ENCODE measurements at regions of chr2 and their contacts with region 1.

Region 1: GRCh38 chr2:36413218-36413617 is 57.6 kb downstream of the CRIM1 start:
- DNase-seq: no peak
- ATAC-seq: peak in 3 of 4 donors; percentile 18 to 52 (median 51)
- H3K4me3 ChIP-seq: no peak overlapping the region
- H3K27ac ChIP-seq: peak overlapping the region; percentile 22 to 63 (median 48)
- H3K4me1 ChIP-seq: peaks cover 15 to 100% (median 83%) of the 10 kb centered on the region in 12 donors
- H3K27me3 ChIP-seq: no peaks in the 10 kb centered on the region
- CTCF ChIP-seq: no peak
- POLR2A ChIP-seq: no peak

Region 2: DNA sequence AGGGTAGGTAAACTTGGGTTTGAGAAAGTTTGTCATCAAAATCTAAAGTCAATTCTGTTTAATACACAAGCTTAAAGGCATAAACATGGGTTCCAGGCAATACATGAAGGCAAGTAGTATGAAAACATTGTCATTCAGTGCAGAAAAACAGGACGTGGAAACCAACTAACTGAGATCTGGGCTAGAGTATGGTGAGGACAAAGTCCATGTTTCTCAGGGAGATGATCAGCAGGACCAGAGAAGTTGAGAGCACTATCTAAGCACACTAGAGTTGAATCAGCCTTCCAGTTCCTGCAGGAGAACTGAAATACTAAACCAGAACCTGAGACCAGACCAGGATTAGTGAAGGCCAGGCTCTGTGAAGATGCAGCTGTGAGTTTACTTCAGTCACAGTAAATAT is 360.4 kb before region 1 on chr2:
- intact Hi-C with region 1: no loop called
- DNase-seq: no peak
- ATAC-seq: no peak
- H3K4me3 ChIP-seq: no peak overlapping the region
- H3K27ac ChIP-seq: no peak overlapping the region
- H3K4me1 ChIP-seq: no peaks in the 10 kb centered on the region
- H3K27me3 ChIP-seq: no peaks in the 10 kb centered on the region
- CTCF ChIP-seq: no peak
- POLR2A ChIP-seq: no peak

Region 3: DNA sequence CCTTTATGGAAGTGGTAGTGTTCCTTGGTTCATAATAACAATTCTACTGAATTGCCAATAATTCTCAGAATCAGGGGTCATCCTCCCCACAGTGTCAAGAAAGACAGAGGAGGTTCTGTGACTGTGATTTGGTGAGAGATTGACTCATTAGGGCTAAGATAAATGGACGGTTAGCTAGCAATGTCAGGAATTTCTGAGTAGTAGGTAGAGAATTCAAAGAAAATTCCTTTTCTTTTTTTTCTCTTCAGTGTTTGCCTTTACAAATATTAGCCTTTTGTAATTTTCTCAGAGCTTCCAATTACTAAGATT is 74.4 kb before region 1 on chr2:
- intact Hi-C with region 1: no loop called
- DNase-seq: no peak
- ATAC-seq: no peak
- H3K4me3 ChIP-seq: no peak overlapping the region
- H3K27ac ChIP-seq: no peak overlapping the region
- H3K4me1 ChIP-seq: no peaks in the 10 kb centered on the region
- H3K27me3 ChIP-seq: peaks cover 0 to 5% (median 0%) of the 10 kb centered on the region in 9 donors
- CTCF ChIP-seq: no peak
- POLR2A ChIP-seq: no peak

Region 4: GRCh38 chr2:36362291-36362690 is 50.9 kb before region 1 on chr2:
- intact Hi-C with region 1: loop called in 9 of 10 experiments (anchors 5 kb)
- DNase-seq: no peak
- ATAC-seq: no peak
- H3K4me3 ChIP-seq: no peak overlapping the region
- H3K27ac ChIP-seq: no peak overlapping the region
- H3K4me1 ChIP-seq: peaks cover 0 to 84% (median 63%) of the 10 kb centered on the region in 12 donors
- H3K27me3 ChIP-seq: peaks cover 0 to 5% (median 0%) of the 10 kb centered on the region in 9 donors
- CTCF ChIP-seq: no peak
- POLR2A ChIP-seq: no peak

Region 5: GRCh38 chr2:36450466-36451196 is 37.4 kb after region 1 on chr2:
- intact Hi-C with region 1: loop called in 3 of 10 experiments (anchors 5 kb)
- DNase-seq: no peak
- ATAC-seq: peak in 3 of 4 donors; percentile 50 to 77 (median 52)
- H3K4me3 ChIP-seq: no peak overlapping the region
- H3K27ac ChIP-seq: peak overlapping the region in 8 of 12 donors; percentile 9 to 76 (median 70)
- H3K4me1 ChIP-seq: peaks cover 12 to 86% (median 54%) of the 10 kb centered on the region in 12 donors
- H3K27me3 ChIP-seq: no peaks in the 10 kb centered on the region
- CTCF ChIP-seq: no peak
- POLR2A ChIP-seq: no peak

Region 6: GRCh38 chr2:36461039-36461681 is 47.9 kb after region 1 on chr2:
- intact Hi-C with region 1: loop called in 2 of 10 experiments (anchors 5 kb)
- DNase-seq: no peak
- ATAC-seq: peak in 3 of 4 donors; percentile 37 to 57 (median 37)
- H3K4me3 ChIP-seq: no peak overlapping the region
- H3K27ac ChIP-seq: peak overlapping the region in 5 of 12 donors; percentile 8 to 50 (median 31)
- H3K4me1 ChIP-seq: peaks cover 3 to 67% (median 38%) of the 10 kb centered on the region in 12 donors
- H3K27me3 ChIP-seq: no peaks in the 10 kb centered on the region
- CTCF ChIP-seq: no peak
- POLR2A ChIP-seq: no peak

Region 7: DNA sequence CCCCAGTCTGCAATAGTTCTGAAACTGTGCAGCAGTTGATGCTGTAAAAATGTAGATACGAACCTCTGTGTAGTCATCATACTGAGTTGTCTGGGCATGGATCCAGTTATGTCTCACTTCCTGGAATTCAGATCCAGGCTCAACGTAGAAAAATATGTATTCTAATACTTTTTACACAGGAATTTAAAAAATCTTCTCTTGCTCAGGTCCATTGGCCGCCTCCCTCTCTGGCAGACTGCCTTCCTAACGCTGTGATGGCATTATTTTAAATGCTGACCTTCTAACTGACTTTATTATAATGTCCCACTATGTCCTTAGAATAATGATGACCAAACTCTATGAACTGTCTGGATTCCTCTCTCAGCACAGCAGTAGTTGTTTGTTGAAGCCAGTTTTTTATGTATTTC is 65.1 kb after region 1 on chr2:
- intact Hi-C with region 1: no loop called
- DNase-seq: peak in 1 of 5 donors; percentile 42
- ATAC-seq: peak; percentile 50 to 88 (median 76)
- H3K4me3 ChIP-seq: no peak overlapping the region
- H3K27ac ChIP-seq: peak overlapping the region in 10 of 12 donors; percentile 35 to 68 (median 46)
- H3K4me1 ChIP-seq: peaks cover 0 to 29% (median 17%) of the 10 kb centered on the region in 12 donors
- H3K27me3 ChIP-seq: no peaks in the 10 kb centered on the region
- CTCF ChIP-seq: no peak
- POLR2A ChIP-seq: no peak

Region 8: DNA sequence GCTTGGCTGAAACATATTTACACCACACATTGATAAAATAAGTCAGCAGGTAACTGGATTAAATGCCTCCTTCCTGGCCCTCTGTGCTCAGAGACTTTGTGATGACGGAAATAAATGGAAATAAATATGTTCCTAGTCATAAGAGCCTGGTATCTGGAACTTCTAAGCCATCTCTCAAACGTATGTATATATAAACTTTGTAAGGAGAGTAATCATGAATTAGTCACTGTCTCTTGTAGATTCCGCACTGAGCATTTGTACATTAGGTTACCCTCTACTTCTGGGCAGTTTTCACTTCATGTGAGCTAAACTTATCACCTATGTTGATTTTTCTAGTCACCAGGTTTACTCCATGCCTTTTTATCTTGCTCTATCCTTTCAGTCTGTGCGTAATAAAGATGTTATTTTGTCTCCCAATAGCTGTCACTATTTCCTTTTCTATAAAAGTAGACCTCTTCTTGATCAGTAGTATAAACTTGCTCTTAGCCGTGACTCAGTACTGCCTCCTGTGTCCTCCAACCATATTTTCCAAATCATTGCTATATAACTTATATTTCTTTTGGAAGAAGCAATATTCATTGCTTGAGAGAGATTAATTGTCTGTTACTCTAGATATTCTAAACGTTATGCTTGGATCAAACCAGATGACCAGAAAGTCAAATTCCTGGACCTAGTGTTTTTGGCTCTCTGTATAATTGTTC is 131.6 kb after region 1 on chr2:
- intact Hi-C with region 1: no loop called
- DNase-seq: no peak
- ATAC-seq: no peak
- H3K4me3 ChIP-seq: no peak overlapping the region
- H3K27ac ChIP-seq: no peak overlapping the region
- H3K4me1 ChIP-seq: peaks cover 0 to 24% (median 14%) of the 10 kb centered on the region in 12 donors
- H3K27me3 ChIP-seq: no peaks in the 10 kb centered on the region
- CTCF ChIP-seq: peak in 3 of 12 donors; percentile 5 to 13 (median 11)
- POLR2A ChIP-seq: no peak

Region 9: GRCh38 chr2:36597532-36598377 is 184.5 kb after region 1 on chr2 and contains the start of gene FEZ2:
- intact Hi-C with region 1: loop called in 1 of 10 experiments (anchors 10 kb)
- DNase-seq: peak; percentile 80 to 90 (median 84)
- ATAC-seq: peak; percentile 91 to 99 (median 98)
- H3K4me3 ChIP-seq: peak within 1 kb of the TSS; percentile 76 to 100 (median 99)
- H3K27ac ChIP-seq: peak within 1 kb of the TSS; percentile 85 to 100 (median 98)
- H3K4me1 ChIP-seq: peaks cover 0 to 29% (median 18%) of the 10 kb centered on the region in 12 donors
- H3K27me3 ChIP-seq: no peaks in the 10 kb centered on the region
- CTCF ChIP-seq: peak in 3 of 12 donors; percentile 12 to 18 (median 16)
- POLR2A ChIP-seq: peak in 1 of 2 donors; percentile 44
- total RNA-seq, gene FEZ2: 39.4 to 55.4 (median 50.2) TPM